ENCODE measurements at regions of chr16 and their contacts with region 1.

Region 1: GRCh38 chr16:81616321-81617055 is 162.6 kb upstream of the PLCG2 start:
- DNase-seq: peak; percentile 63
- H3K4me3 Mint-ChIP-seq: peak overlapping the region; percentile 49
- H3K27ac Mint-ChIP-seq: peak overlapping the region; percentile 91
- H3K4me1 Mint-ChIP-seq: peaks cover 11% of the 10 kb centered on the region
- H3K27me3 Mint-ChIP-seq: no peaks in the 10 kb centered on the region

Region 2: GRCh38 chr16:81444448-81445121 is 171.9 kb before region 1 on chr16 and contains the start of gene CMIP:
- intact Hi-C with region 1: loop called (anchors 5 kb)
- DNase-seq: peak; percentile 77
- H3K4me3 Mint-ChIP-seq: peak within 1 kb of the TSS; percentile 90
- H3K27ac Mint-ChIP-seq: peak within 1 kb of the TSS; percentile 83
- H3K4me1 Mint-ChIP-seq: peaks cover 38% of the 10 kb centered on the region
- H3K27me3 Mint-ChIP-seq: peaks cover 29% of the 10 kb centered on the region
- total RNA-seq, gene CMIP: 68.0 and 76.9 TPM in 2 replicates

Region 3: GRCh38 chr16:81521151-81521626 is 95.3 kb before region 1 on chr16:
- intact Hi-C with region 1: loop called (anchors 1 kb)
- DNase-seq: peak; percentile 81
- H3K4me3 Mint-ChIP-seq: no peak overlapping the region
- H3K27ac Mint-ChIP-seq: peak overlapping the region; percentile 54
- H3K4me1 Mint-ChIP-seq: peaks cover 55% of the 10 kb centered on the region
- H3K27me3 Mint-ChIP-seq: no peaks in the 10 kb centered on the region

Region 4: GRCh38 chr16:81531419-81531821 is 85.1 kb before region 1 on chr16:
- intact Hi-C with region 1: no loop called
- DNase-seq: no peak
- H3K4me3 Mint-ChIP-seq: no peak overlapping the region
- H3K27ac Mint-ChIP-seq: no peak overlapping the region
- H3K4me1 Mint-ChIP-seq: peaks cover 22% of the 10 kb centered on the region
- H3K27me3 Mint-ChIP-seq: no peaks in the 10 kb centered on the region

Region 5: DNA sequence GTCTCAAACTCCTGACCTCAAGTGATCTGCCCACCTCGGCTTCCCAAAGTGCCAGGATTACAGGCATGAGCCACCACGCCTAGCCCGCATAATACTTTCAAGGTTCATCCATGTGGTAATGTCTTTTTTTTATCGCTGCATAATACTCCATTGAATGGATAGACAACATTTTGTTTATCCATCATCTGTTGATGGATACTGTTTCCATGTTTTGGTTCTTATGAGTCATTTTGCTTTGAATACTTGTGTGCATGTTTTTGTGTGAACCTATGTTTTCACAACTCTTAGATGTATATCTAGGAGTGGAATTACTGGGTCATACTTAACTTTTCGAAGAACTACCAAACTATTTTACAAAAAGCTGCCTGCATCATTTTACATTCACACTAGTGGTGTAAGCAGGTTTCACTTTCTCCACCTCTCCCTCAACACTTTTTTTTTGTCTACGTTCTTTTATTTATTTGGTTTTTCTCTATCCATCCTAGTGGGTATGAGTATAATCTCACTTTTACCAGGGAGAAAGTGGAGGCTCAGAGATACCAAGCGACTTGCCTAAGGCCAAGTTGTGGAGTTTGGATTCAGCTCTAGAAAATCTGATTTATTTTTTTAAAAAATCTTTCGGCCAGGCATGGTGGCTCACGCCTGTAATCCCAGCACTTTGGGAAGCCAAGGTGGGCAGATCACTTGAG is 20.7 kb before region 1 on chr16:
- intact Hi-C with region 1: loop called (anchors 1 kb)
- DNase-seq: no peak
- H3K4me3 Mint-ChIP-seq: no peak overlapping the region
- H3K27ac Mint-ChIP-seq: peak overlapping the region; percentile 91
- H3K4me1 Mint-ChIP-seq: peaks cover 30% of the 10 kb centered on the region
- H3K27me3 Mint-ChIP-seq: no peaks in the 10 kb centered on the region